ENCODE measurements at regions of chr6 and their contacts with region 1.

Region 1: GRCh38 chr6:11043961-11044711 is at the start of gene ELOVL2:
- DNase-seq: no peak
- H3K4me3 ChIP-seq: peak within 1 kb of the TSS; percentile 41
- H3K27me3 ChIP-seq: peaks cover 16% of the 10 kb centered on the region
- CTCF ChIP-seq: peak; percentile 50
- polyA plus RNA-seq, gene ELOVL2: 0.17 and 0.21 TPM in 2 replicates

Region 2: DNA sequence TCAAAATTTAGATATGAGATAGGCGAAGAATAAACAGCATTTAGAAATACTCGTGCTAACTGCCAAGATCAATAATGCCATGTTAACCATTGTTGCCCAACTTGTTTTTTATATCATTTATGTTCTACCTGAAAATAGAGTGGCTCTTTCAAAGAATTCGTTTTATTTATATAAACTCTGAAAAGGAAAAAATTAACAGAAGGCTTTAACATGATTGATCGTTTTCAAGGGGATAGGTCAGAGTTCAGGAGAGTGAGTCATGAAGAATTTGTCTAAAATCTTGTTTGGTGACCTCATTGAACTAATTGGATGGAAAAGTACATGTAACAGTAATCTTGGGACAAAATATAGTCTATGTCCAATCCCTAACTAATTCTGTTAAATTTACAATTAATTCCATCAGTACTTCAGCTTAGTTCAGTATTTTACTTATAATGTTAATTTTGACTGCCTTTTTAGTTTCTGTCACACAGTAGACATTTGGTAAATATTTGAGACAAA is 11.0 kb after region 1 on chr6:
- CTCF ChIA-PET with region 1: interaction called, 12 read pairs
- POLR2A ChIA-PET with region 1: no interaction called
- DNase-seq: no peak
- H3K4me3 ChIP-seq: no peak overlapping the region
- H3K27me3 ChIP-seq: no peaks in the 10 kb centered on the region
- CTCF ChIP-seq: no peak

Region 3: GRCh38 chr6:11096109-11096508 is 52.0 kb after region 1 on chr6:
- CTCF ChIA-PET with region 1: no interaction called
- POLR2A ChIA-PET with region 1: no interaction called
- DNase-seq: no peak
- H3K4me3 ChIP-seq: no peak overlapping the region
- H3K27me3 ChIP-seq: no peaks in the 10 kb centered on the region
- CTCF ChIP-seq: no peak

Region 4: GRCh38 chr6:11207199-11207968 is 163.2 kb after region 1 on chr6:
- CTCF ChIA-PET with region 1: no interaction called
- POLR2A ChIA-PET with region 1: no interaction called
- DNase-seq: peak; percentile 95
- H3K4me3 ChIP-seq: no peak overlapping the region
- H3K27me3 ChIP-seq: no peaks in the 10 kb centered on the region
- CTCF ChIP-seq: no peak

Region 5: GRCh38 chr6:11381801-11382513 is 337.8 kb after region 1 on chr6:
- CTCF ChIA-PET with region 1: no interaction called
- POLR2A ChIA-PET with region 1: no interaction called
- DNase-seq: no peak
- H3K4me3 ChIP-seq: no peak overlapping the region
- H3K27me3 ChIP-seq: no peaks in the 10 kb centered on the region; the same call in 1 of the 2 replicates
- CTCF ChIP-seq: no peak

Measured in BJ (cell line).